ENCODE measurements at regions of chrX and their contacts with region 1.

Region 1: GRCh38 chrX:70672326-70672725 is 227.7 kb downstream of the DLG3 start:
- DNase-seq: no peak
- H3K4me3 Mint-ChIP-seq: no peak overlapping the region
- H3K27ac Mint-ChIP-seq: no peak overlapping the region
- H3K4me1 Mint-ChIP-seq: peaks cover 19% of the 10 kb centered on the region
- H3K27me3 Mint-ChIP-seq: no peaks in the 10 kb centered on the region

Region 2: DNA sequence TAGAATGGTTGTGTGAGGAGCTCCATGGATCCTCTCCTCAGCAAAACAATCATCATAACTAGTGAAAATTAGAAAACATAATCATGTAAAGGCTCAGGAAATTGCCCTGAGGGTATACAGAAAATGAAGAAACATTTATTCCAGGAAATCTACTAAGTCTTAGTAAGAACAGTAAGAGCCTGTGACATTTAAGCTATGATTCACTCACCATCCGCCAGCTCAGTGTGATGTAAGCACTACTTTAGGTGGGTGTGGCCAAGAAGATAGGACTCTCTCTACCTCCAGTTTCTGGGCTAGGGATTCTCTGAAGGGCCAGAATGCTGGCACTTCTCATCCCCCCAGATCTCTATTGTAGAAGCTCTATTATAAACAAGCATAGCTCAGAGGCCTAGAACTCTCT is 80.2 kb before region 1 on chrX:
- CTCF ChIA-PET with region 1: no interaction called
- intact Hi-C with region 1: loop called (anchors 2 kb)
- DNase-seq: peak; percentile 63
- H3K4me3 Mint-ChIP-seq: no peak overlapping the region
- H3K27ac Mint-ChIP-seq: peak overlapping the region; percentile 36
- H3K4me1 Mint-ChIP-seq: peaks cover 12% of the 10 kb centered on the region
- H3K27me3 Mint-ChIP-seq: no peaks in the 10 kb centered on the region

Region 3: GRCh38 chrX:70694339-70695122 is 22.2 kb after region 1 on chrX:
- CTCF ChIA-PET with region 1: no interaction called
- intact Hi-C with region 1: loop called (anchors 1 kb)
- DNase-seq: no peak
- H3K4me3 Mint-ChIP-seq: no peak overlapping the region
- H3K27ac Mint-ChIP-seq: no peak overlapping the region
- H3K4me1 Mint-ChIP-seq: peaks cover 7% of the 10 kb centered on the region
- H3K27me3 Mint-ChIP-seq: no peaks in the 10 kb centered on the region

Region 4: DNA sequence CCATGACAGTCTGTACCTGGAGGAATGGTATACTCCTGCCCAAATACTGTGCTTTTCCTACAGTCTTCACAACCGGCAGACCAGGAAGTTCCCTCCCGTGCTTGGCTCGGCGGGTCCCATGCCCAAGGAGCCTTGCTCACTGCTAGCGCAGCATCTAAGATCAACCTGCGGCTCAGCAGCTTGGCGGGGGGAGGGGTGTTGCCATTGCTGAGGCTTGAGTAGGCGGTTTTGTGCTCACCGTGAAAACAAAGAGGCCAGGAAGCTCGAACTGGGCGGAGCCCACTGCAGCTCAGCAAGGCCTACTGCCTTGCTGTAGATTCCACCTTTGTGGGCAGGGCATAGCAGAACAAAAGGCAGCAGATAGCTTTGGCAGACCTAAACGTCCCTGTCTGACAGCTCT is 83.5 kb after region 1 on chrX:
- CTCF ChIA-PET with region 1: no interaction called
- intact Hi-C with region 1: loop called (anchors 5 kb)
- DNase-seq: peak; percentile 78
- H3K4me3 Mint-ChIP-seq: no peak overlapping the region
- H3K27ac Mint-ChIP-seq: no peak overlapping the region
- H3K4me1 Mint-ChIP-seq: peaks cover 12% of the 10 kb centered on the region
- H3K27me3 Mint-ChIP-seq: no peaks in the 10 kb centered on the region